ENCODE measurements at regions of chr4 and their contacts with region 1.

Region 1: DNA sequence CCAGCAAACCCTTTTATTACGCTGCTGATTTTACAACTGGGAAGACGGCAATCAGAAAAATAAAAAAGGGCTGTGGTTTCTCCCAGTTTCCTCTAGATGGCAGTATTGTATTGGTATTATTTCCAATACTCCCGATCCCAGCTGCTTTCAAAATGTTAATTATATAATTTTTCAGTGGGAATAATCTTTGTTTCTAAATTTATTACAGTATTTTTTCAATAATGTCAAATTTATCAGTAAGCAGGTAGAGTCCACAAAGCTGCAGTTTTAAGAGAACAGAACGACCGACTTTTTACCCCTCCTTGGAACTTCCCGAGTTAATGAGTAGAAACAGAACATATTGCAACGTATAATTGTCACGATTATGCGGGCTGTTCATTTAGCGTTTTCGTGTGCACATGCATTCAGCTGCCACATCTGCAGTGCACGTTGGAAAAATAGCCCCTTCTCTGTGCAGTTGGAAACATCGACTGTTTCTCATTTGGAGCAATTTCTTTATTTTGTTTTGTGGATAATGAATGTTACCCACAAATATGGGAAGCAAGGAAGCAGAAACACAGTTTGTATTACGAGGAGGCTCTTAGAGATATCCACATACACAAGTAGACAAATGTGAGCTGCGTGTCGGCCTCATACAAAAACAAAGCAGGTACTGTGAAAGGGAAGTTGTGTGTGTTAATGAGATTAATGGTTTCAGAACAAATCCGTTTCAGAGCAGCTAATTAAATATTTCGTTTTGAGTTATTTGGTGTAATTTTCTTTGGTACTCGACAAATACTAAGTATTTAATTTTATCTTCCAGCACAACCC is 188.0 kb downstream of the STIM2 start:
- DNase-seq: peak; percentile 46
- H3K4me3 ChIP-seq: peak overlapping the region; percentile 24 to 27; a peak in 3 of 4 replicates
- H3K27ac ChIP-seq: no peak overlapping the region
- H3K4me1 ChIP-seq: peaks cover 0 to 3% of the 10 kb centered on the region in 2 experiments; a peak in 2 of 4 replicates
- H3K27me3 ChIP-seq: peaks cover 46% of the 10 kb centered on the region; the same call in 1 of the 2 replicates
- CTCF ChIP-seq: peak; percentile 80
- EP300 ChIP-seq: no peak
- RAD21 ChIP-seq: peak; percentile 80

Region 2: DNA sequence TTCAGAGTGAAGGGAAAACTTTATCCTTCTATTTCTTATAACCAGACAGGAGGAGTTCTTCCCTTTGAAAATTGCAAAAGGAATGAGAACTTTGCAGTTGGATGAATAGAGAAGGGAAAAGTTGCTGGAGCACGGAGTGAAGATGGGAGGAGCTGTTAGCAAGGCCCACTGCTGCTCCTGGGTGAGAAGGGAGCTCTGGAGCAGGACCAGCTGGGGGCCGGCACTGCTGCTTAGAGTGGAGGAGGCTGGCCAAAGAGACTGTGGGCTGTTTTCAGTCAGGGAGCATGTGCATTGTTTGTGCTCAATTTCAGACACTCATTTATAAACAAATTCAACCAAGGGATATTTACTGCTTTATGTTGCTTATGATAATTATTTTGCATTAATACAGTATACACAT is 23.8 kb before region 1 on chr4:
- CTCF ChIA-PET with region 1: interaction called, 11 read pairs
- POLR2A ChIA-PET with region 1: no interaction called
- DNase-seq: no peak
- H3K4me3 ChIP-seq: no peak overlapping the region
- H3K27ac ChIP-seq: no peak overlapping the region
- H3K4me1 ChIP-seq: peaks cover 0 to 2% of the 10 kb centered on the region in 2 experiments; a peak in 1 of 4 replicates
- H3K27me3 ChIP-seq: no peaks in the 10 kb centered on the region
- CTCF ChIP-seq: no peak
- EP300 ChIP-seq: no peak
- RAD21 ChIP-seq: no peak

Region 3: GRCh38 chr4:27318743-27319142 is 270.1 kb after region 1 on chr4:
- CTCF ChIA-PET with region 1: interaction called, 39 read pairs
- POLR2A ChIA-PET with region 1: no interaction called
- DNase-seq: peak; percentile 11
- H3K4me3 ChIP-seq: 0 out of 4 replicates have a peak overlapping the region, but pooled peaks of 1 of the 2 experiments have one; percentile 16
- H3K27ac ChIP-seq: no peak overlapping the region
- H3K4me1 ChIP-seq: no peaks in the 10 kb centered on the region
- H3K27me3 ChIP-seq: no peaks in the 10 kb centered on the region
- CTCF ChIP-seq: peak; percentile 49
- EP300 ChIP-seq: no peak
- RAD21 ChIP-seq: peak; percentile 57